ENCODE measurements at regions of chr2 and their contacts with region 1.

Region 1: GRCh38 chr2:165203689-165204559 is at the start of gene SCN3A:
- DNase-seq: no peak
- ATAC-seq: no peak
- total RNA-seq, gene SCN3A: 0.84 TPM

Region 2: DNA sequence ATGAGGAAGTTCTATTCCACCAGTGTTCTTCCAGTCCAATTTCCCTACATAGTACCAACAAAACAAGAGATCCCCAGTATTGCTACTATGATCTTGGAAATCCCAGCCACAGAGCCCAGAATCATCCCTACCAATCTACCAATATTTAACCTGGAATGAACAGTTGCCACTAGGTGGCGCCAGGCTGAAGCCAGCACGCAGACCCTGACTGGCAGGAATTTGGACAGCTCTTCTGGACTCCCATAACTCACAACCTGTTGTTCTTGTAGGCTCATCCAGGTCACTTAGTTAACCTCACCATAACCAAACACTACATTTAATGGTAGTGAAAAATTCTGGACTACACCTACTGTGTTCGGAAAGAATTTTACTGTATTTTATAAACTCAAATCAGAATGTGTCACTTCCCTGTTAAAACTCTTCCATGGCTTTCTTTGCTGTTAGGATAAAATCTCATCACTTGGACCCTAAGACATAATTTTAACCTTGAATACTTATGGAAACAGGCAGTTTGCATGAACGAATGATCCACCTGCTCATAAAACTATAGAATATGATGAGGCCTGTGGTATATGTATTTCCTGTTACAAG is 188.8 kb before region 1 on chr2:
- intact Hi-C with region 1: loop called (anchors 5 kb)
- DNase-seq: peak; percentile 69
- ATAC-seq: peak; percentile 79